K562 (cell line): ENCODE measurements at regions of chr16 and their contacts with region 1.

Region 1: DNA sequence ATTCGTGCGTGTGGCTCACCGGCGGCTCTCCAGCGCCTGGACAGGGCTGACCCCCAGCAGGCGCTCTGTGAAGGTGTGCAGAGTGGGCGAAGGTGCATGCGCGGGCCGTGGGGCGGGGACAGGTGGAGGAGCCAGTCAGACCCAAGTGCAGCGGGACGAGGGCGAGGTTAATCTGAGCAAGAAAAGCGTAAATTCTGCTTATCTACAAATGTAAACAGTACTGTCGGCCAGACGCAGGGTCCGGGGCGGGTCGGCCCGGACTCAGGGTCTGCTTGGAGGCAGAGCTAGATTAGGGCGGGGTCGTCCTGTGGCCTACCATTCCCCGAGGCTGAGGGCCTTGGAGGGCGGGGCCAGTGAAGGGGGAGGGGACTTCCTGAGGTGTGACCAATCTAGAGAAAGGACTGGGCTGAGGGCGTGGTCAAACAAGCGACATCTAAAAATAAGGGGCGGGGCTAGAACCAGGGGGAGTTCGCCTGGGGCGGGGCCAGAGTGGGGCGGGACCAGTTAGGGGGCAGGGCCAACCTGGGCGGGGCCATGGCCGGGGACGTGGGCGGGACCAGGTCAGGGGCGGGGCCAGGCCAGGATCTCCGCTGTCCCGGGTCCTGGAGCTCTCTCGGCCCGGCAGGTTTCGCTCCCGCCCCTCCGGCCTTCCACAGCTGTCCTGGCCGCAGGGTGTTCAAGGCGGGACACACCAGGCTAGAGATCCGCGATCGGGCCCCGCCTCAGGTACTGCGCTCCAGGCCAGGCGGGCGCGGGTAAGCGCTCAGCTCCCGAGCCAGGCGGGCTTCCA is at the start of gene SEC14L5:
- DNase-seq: peak; percentile 98 to 100 (median 100)
- ATAC-seq: peak; percentile 95
- H3K4me3 ChIP-seq: peak within 1 kb of the TSS; percentile 49
- H3K27ac ChIP-seq: no peak within 1 kb of the TSS
- H3K4me1 ChIP-seq: peaks cover 3 to 24% of the 10 kb centered on the region in 2 experiments; a peak in 3 of 5 replicates
- H3K27me3 ChIP-seq: peaks cover 34 to 51% of the 10 kb centered on the region in 2 experiments; a peak in 4 of 5 replicates
- CTCF ChIP-seq: no peak
- EP300 ChIP-seq: no peak
- POLR2A ChIP-seq: no peak
- RAD21 ChIP-seq: no peak
- polyA plus RNA-seq, gene SEC14L5: not detected

Region 2: DNA sequence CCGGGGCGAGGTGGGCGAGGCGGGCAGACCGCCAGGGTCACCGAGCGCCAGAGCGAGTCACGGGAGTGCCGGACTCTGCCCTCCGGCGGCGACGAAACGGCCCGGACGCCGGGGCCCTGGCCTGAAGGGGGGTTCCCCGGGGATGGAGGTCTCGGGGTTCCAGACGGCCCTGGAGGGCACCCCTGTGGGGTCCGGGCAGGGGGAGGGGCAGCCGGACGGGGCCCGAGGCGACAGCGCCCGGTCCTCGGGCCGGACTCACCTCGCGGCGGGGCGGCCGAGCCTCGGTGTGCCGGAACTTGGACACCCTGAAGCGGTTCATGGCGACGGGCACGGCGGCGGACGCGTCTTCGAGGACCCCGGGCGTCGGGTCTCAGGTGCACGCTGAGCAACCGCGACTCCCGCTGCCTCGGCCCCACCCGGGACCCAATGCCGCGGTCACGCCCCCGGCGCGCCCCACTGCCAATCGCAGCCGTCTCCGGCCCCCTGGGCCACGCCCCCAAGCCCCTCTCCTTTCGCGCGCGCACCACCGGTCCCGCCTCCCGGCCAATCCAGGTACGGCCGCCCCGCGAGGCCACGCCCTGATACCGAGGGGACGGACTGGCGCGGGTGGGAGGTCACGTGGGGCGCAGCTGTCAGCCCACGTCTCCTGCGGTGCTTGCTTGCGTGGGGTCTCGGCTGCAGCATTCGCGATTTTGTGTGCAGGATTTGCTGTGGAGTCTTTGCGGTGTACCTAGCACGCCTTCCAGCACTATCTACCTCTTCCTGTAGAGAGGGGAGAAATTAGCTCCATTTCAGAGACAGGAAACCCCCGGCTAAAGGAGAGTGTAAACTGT is 541.5 kb before region 1 on chr16 and contains the start of gene CORO7:
- CTCF ChIA-PET with region 1: no interaction called
- POLR2A ChIA-PET with region 1: no interaction called
- in situ Hi-C with region 1: no loop called
- intact Hi-C with region 1: loop called (anchors 10 kb)
- DNase-seq: peak; percentile 97 to 98 (median 98)
- ATAC-seq: peak; percentile 97
- H3K4me3 ChIP-seq: peak within 1 kb of the TSS; percentile 91
- H3K27ac ChIP-seq: peak within 1 kb of the TSS; percentile 93
- H3K4me1 ChIP-seq: peaks cover 21 to 38% of the 10 kb centered on the region in 2 experiments; a peak in 4 of 5 replicates
- H3K27me3 ChIP-seq: no peaks in the 10 kb centered on the region
- CTCF ChIP-seq: 0 out of 6 replicates have a peak, but pooled peaks of 1 of the 3 experiments have one; percentile 1
- EP300 ChIP-seq: no peak
- POLR2A ChIP-seq: peak; percentile 74
- RAD21 ChIP-seq: no peak
- polyA plus RNA-seq, gene CORO7: 0.45 to 0.51 TPM

Region 3: DNA sequence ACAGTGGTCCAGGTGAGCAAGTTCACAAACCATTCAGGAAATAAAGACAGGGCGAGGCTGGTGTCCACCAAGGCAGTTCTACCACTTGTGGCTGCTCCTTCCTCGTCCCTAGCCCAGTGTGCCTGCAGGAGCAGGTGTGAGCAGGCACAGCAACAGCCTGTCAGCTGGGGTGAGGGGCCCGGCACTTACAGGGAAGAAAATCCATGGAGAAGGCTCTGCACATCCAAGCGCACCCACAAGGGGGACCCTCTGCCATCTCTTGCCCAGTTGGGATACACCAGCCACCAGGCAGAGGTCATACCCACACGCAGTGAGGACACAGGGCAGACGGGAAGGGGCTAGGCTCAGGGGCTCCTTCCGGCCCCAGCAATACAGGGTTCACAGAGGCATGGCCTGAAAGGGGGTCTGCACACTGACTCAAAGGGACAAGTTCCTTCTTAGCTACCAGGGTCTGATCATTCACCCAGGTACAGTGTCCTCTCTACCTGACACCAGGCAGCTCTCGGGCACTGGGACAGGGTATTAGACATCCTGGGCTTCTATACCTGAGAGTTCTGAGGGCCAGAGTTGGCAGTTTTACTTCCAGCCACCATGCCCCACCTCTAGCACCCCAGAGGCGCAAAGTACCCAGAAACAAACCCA is 446.4 kb before region 1 on chr16:
- CTCF ChIA-PET with region 1: no interaction called
- POLR2A ChIA-PET with region 1: no interaction called
- in situ Hi-C with region 1: loop called (anchors 10 kb)
- intact Hi-C with region 1: no loop called
- DNase-seq: peak; percentile 43 to 57 (median 48)
- ATAC-seq: peak; percentile 82
- H3K4me3 ChIP-seq: no peak overlapping the region
- H3K27ac ChIP-seq: no peak overlapping the region
- H3K4me1 ChIP-seq: peaks cover 0 to 14% of the 10 kb centered on the region in 2 experiments; a peak in 2 of 5 replicates
- H3K27me3 ChIP-seq: no peaks in the 10 kb centered on the region
- CTCF ChIP-seq: peak; percentile 58 to 70 (median 65)
- EP300 ChIP-seq: no peak
- POLR2A ChIP-seq: no peak
- RAD21 ChIP-seq: peak in 1 of 2 experiments; percentile 43; a peak in 3 of 4 replicates

Region 4: GRCh38 chr16:4517812-4518680 is 439.9 kb before region 1 on chr16:
- CTCF ChIA-PET with region 1: interaction called, 13 read pairs
- POLR2A ChIA-PET with region 1: no interaction called
- in situ Hi-C with region 1: loop called (anchors 10 kb)
- intact Hi-C with region 1: loop called (anchors 10 kb)
- DNase-seq: peak; percentile 46 to 59 (median 54)
- ATAC-seq: peak; percentile 90
- H3K4me3 ChIP-seq: no peak overlapping the region
- H3K27ac ChIP-seq: no peak overlapping the region
- H3K4me1 ChIP-seq: peaks cover 6 to 23% of the 10 kb centered on the region in 2 experiments; a peak in 4 of 5 replicates
- H3K27me3 ChIP-seq: no peaks in the 10 kb centered on the region
- CTCF ChIP-seq: peak; percentile 84 to 88 (median 85)
- EP300 ChIP-seq: no peak
- POLR2A ChIP-seq: no peak
- RAD21 ChIP-seq: peak; percentile 70 to 84

Region 5: DNA sequence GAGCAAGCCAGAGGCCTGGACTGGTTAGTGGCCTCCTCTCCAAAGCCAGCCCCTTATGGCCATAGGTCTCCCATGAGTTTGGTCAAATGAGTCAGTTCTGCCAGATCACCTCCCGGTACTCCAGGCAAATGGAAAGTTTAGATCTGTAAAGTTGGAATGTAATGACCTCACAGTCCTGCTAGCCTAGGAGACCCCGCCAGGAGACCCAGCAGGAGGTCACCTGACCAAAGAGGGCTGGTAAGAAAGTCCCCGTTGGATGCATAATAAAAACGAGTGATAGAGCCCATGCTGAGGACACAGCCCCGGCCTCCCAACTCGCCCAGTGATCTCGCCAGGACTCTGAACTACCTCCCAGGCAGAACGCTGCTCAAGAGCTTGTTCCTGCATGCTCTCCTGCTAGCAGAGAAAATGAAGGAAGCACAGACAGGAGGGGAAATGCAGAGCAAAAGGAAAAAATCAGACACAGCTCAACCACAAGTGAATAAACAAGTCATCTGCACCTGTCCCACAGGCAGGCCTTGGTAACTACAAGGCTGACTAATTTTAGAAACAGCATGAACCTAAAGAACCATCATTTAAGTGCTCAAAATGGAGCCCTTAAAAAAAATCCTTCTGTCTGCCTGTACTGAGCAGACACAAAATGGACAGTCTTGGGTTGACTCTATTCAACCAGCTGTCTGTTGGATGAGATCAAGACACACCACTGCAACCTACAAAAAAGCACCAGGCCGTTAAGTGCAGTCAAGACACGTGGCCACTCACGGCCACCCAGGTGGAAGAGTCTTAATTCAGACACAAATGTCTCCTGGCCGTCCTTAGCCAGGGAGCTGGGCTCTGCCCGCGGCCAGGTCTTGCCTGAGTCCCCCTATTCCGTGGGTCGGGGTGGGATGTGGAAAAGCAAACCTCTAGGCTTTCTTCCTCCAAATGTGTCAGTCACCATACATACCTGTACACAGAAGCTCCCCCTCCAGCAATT is 428.5 kb before region 1 on chr16:
- CTCF ChIA-PET with region 1: no interaction called
- POLR2A ChIA-PET with region 1: no interaction called
- in situ Hi-C with region 1: no loop called
- intact Hi-C with region 1: loop called (anchors 10 kb)
- DNase-seq: no peak
- ATAC-seq: no peak
- H3K4me3 ChIP-seq: no peak overlapping the region
- H3K27ac ChIP-seq: no peak overlapping the region
- H3K4me1 ChIP-seq: peaks cover 5 to 12% of the 10 kb centered on the region in 2 experiments; a peak in 4 of 5 replicates
- H3K27me3 ChIP-seq: peaks cover 2 to 23% of the 10 kb centered on the region in 2 experiments; a peak in 2 of 5 replicates
- CTCF ChIP-seq: no peak
- EP300 ChIP-seq: no peak
- POLR2A ChIP-seq: no peak
- RAD21 ChIP-seq: no peak

Region 6: DNA sequence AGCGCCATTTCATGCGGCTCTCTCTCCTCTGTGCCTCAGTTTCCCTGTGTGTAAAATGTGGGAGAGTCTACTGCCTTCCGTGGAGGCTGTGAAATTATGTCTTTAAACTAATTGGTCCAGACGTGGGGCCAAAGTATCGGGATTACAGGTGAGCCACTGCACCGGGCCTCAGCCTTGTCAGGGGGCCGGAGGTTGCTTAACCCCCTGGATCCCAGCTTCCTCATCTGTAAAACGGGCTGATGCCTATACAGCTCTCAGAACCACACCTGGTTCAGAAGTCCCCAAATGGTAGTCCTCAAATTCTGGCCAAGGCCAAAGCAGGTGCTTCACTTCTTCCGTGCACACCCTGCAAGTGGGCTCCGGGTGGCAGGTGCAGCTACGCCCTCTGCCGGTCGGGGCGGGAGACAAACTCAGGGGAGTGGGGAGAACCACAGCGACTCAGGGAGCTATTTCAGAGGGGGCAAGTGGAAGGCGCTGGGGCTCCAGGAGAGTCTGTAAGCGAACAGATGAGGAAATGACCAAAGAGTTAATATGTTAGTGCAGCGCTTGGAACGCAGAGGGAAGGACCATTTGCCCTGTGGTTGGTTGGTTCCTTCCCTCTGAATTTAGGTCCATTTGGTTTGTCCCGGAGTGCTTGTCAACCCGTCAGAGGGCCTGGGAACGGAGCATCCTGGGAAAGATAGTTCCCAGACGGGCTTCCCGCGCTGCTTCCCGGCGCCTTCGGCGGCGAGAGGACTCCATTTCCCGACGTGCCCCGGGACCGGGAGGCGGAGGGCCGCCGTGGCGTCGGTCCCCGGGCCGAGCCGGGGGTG is 333.7 kb before region 1 on chr16 and contains the start of gene MGRN1:
- CTCF ChIA-PET with region 1: no interaction called
- POLR2A ChIA-PET with region 1: no interaction called
- in situ Hi-C with region 1: no loop called
- intact Hi-C with region 1: loop called (anchors 5 kb)
- DNase-seq: peak; percentile 81 to 97 (median 92)
- ATAC-seq: peak; percentile 98
- H3K4me3 ChIP-seq: peak within 1 kb of the TSS; percentile 91
- H3K27ac ChIP-seq: peak within 1 kb of the TSS; percentile 92
- H3K4me1 ChIP-seq: peaks cover 16 to 19% of the 10 kb centered on the region in 2 experiments; a peak in 4 of 5 replicates
- H3K27me3 ChIP-seq: no peaks in the 10 kb centered on the region
- CTCF ChIP-seq: peak; percentile 89 to 98 (median 96)
- EP300 ChIP-seq: no peak; the same call in 1 of the 2 replicates
- POLR2A ChIP-seq: no peak
- RAD21 ChIP-seq: peak; percentile 52 to 76
- polyA plus RNA-seq, gene MGRN1: 0.15 to 0.27 TPM

Region 7: GRCh38 chr16:4713663-4714501 is 244.0 kb before region 1 on chr16:
- CTCF ChIA-PET with region 1: interaction called, 5 read pairs
- POLR2A ChIA-PET with region 1: no interaction called
- in situ Hi-C with region 1: loop called (anchors 5 kb)
- intact Hi-C with region 1: loop called (anchors 1 kb)
- DNase-seq: no peak
- ATAC-seq: no peak
- H3K4me3 ChIP-seq: no peak overlapping the region
- H3K27ac ChIP-seq: no peak overlapping the region
- H3K4me1 ChIP-seq: no peaks in the 10 kb centered on the region
- H3K27me3 ChIP-seq: no peaks in the 10 kb centered on the region
- CTCF ChIP-seq: no peak
- EP300 ChIP-seq: no peak
- POLR2A ChIP-seq: no peak
- RAD21 ChIP-seq: no peak

Region 8: GRCh38 chr16:5379954-5380353 is 422.0 kb after region 1 on chr16:
- CTCF ChIA-PET with region 1: no interaction called
- POLR2A ChIA-PET with region 1: no interaction called
- in situ Hi-C with region 1: no loop called
- intact Hi-C with region 1: no loop called
- DNase-seq: no peak
- ATAC-seq: no peak
- H3K4me3 ChIP-seq: no peak overlapping the region
- H3K27ac ChIP-seq: no peak overlapping the region
- H3K4me1 ChIP-seq: no peaks in the 10 kb centered on the region
- H3K27me3 ChIP-seq: peaks cover 3 to 21% of the 10 kb centered on the region in 2 experiments; a peak in 3 of 5 replicates
- CTCF ChIP-seq: no peak
- EP300 ChIP-seq: no peak
- POLR2A ChIP-seq: no peak
- RAD21 ChIP-seq: no peak